Common myeloid progenitor, CD34-positive (primary cell): ENCODE measurements at regions of chr3 and their contacts with region 1.

Region 1: DNA sequence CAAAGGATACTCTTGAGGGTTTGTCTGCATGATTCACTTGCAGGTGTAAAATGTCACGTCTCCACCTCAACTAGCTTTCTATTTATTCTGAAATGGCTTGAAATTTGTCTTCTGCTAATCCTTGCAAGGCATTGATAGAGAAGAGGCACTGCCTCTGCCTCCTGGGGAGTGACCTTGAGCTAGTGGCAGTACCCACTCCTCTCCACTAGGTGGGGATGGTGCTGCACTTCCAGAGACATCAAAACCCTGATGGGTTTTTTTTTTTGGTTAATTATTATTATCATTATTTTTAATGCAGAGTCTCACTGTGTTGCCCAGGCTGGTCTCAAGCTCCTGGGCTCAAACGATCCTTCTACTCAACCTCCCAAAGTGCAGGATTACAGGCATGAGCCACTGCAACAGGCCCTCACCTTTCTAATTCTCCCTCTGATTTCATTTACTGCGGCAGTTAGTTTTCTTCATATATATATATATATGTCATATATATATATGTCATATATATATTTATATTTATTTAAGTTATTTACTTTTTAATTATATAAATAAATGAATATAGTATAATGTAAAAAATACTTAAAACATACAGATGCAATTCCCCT is 117.6 kb upstream of the EIF1B start:
- DNase-seq: peak; percentile 48 to 78 (median 73)
- H3K4me3 ChIP-seq: no peak overlapping the region
- H3K27ac ChIP-seq: no peak overlapping the region
- H3K4me1 ChIP-seq: peaks cover 0 to 8% (median 3%) of the 10 kb centered on the region in 4 experiments
- H3K27me3 ChIP-seq: no peaks in the 10 kb centered on the region

Region 2: DNA sequence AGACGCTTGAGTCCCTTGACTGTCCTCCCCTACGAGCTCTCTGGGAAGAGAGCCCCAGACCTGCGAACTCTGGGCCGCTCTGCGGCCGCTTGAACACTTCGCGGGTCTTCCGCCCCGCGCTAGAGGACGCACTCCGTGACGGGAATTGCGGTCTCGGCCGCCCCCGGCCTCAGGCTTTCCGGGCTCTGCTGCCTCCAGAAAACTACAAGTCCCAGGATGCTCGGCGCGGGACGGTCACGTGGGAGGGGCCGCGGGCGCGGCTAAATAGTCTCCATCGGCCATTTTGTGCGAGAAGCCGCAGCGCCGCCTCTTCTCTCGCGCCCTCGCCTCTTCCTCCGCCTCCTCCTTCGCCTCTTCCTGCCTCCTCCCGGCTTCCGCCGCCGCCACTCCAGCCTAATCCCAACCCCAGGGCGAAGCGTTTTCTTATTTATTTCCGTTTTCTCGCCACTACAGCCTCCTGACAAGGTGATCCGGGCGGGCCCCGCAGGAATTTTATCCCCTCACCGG is 117.5 kb after region 1 on chr3 and contains the start of gene EIF1B:
- CTCF ChIA-PET with region 1: interaction called, 139 read pairs
- POLR2A ChIA-PET with region 1: no interaction called
- DNase-seq: peak; percentile 97 to 99 (median 97)
- H3K4me3 ChIP-seq: peak within 1 kb of the TSS; percentile 88 to 100 (median 97)
- H3K27ac ChIP-seq: peak within 1 kb of the TSS; percentile 96 to 98
- H3K4me1 ChIP-seq: peaks cover 6 to 17% (median 10%) of the 10 kb centered on the region in 4 experiments
- H3K27me3 ChIP-seq: no peaks in the 10 kb centered on the region

Region 3: GRCh38 chr3:40317061-40317855 is 125.3 kb after region 1 on chr3:
- CTCF ChIA-PET with region 1: interaction called, 139 read pairs
- POLR2A ChIA-PET with region 1: interaction called, 6 read pairs
- DNase-seq: peak; percentile 81 to 89 (median 85)
- H3K4me3 ChIP-seq: no peak overlapping the region
- H3K27ac ChIP-seq: no peak overlapping the region
- H3K4me1 ChIP-seq: no peaks in the 10 kb centered on the region
- H3K27me3 ChIP-seq: no peaks in the 10 kb centered on the region